Heart right ventricle (tissue), 16 donors: ENCODE measurements at regions of chr10 and their contacts with region 1.

Region 1: GRCh38 chr10:72223743-72224101 is 7.6 kb upstream of the ASCC1 start:
- DNase-seq: no peak
- ATAC-seq: peak in 3 of 8 donors; percentile 37 to 49 (median 48)
- H3K4me3 ChIP-seq: no peak overlapping the region
- H3K27ac ChIP-seq: peak overlapping the region in 9 of 10 donors; percentile 9 to 86 (median 59)
- H3K4me1 ChIP-seq: peaks cover 0 to 51% (median 34%) of the 10 kb centered on the region in 9 donors
- H3K27me3 ChIP-seq: no peaks in the 10 kb centered on the region
- CTCF ChIP-seq: no peak

Region 2: GRCh38 chr10:71957546-71958275 is 266.0 kb before region 1 on chr10:
- intact Hi-C with region 1: loop called in 5 of 10 experiments (anchors 5 to 10 kb)
- DNase-seq: no peak
- ATAC-seq: no peak
- H3K4me3 ChIP-seq: no peak overlapping the region
- H3K27ac ChIP-seq: no peak overlapping the region
- H3K4me1 ChIP-seq: peaks cover 2 to 12% (median 8%) of the 10 kb centered on the region in 9 donors
- H3K27me3 ChIP-seq: no peaks in the 10 kb centered on the region
- CTCF ChIP-seq: peak in 1 of 9 donors; percentile 8

Region 3: GRCh38 chr10:72048450-72049124 is 175.1 kb before region 1 on chr10:
- intact Hi-C with region 1: loop called in 6 of 10 experiments (anchors 5 to 10 kb)
- DNase-seq: peak; percentile 94
- ATAC-seq: peak; percentile 58 to 91 (median 84)
- H3K4me3 ChIP-seq: no peak overlapping the region
- H3K27ac ChIP-seq: no peak overlapping the region
- H3K4me1 ChIP-seq: peaks cover 0 to 25% (median 10%) of the 10 kb centered on the region in 9 donors
- H3K27me3 ChIP-seq: no peaks in the 10 kb centered on the region
- CTCF ChIP-seq: peak; percentile 99 to 100 (median 100)

Region 4: DNA sequence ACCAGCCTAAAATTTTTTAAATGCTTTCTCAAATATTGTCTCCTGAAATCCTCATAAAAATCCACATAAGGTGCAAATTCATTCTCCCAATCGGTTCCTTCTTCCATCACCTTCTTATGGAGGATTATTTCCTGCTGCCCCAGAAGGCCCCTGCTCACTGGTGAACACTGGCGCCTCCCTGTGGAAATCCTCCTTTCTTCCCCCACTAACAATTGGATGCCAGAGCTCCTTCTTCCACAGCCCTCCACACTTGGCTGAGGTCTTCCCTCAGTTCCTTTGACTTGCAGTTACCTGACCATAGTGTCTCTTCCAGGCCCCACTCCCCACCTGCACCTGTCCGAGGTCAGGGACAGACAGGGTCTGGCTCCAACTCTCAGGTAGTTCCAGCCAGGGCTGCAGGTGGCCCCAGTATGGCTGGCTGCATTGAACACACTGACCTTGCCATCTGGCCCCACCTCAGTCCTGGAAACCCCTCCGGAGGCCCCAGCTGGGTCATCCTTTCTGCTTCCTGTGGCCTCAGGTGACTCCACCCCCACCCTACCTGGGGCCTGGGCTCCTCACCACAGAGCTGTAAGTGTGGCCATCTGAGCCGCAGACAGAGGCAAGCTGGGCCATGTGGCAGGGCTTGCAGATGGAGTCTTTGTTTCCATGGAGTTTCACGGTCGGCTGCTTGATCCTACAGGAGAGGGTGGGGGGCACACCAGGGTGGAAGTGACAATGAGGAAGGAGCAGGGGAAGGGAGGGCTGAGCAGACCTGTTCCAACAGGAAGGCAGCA is 153.8 kb before region 1 on chr10:
- intact Hi-C with region 1: loop called in 2 of 10 experiments (anchors 10 kb)
- DNase-seq: no peak
- ATAC-seq: no peak
- H3K4me3 ChIP-seq: no peak overlapping the region
- H3K27ac ChIP-seq: no peak overlapping the region
- H3K4me1 ChIP-seq: peaks cover 0 to 53% (median 30%) of the 10 kb centered on the region in 9 donors
- H3K27me3 ChIP-seq: no peaks in the 10 kb centered on the region
- CTCF ChIP-seq: peak in 4 of 9 donors; percentile 11 to 24 (median 14)

Region 5: GRCh38 chr10:72126184-72126871 is 97.4 kb before region 1 on chr10:
- intact Hi-C with region 1: loop called in 8 of 10 experiments (anchors 5 to 10 kb)
- DNase-seq: no peak
- ATAC-seq: peak in 3 of 8 donors; percentile 22 to 41 (median 32)
- H3K4me3 ChIP-seq: no peak overlapping the region
- H3K27ac ChIP-seq: peak overlapping the region in 1 of 10 donors; percentile 1
- H3K4me1 ChIP-seq: peaks cover 0 to 25% (median 6%) of the 10 kb centered on the region in 9 donors
- H3K27me3 ChIP-seq: no peaks in the 10 kb centered on the region
- CTCF ChIP-seq: peak; percentile 7 to 57 (median 38)

Region 6: GRCh38 chr10:72319416-72320254 is 95.9 kb after region 1 on chr10:
- intact Hi-C with region 1: loop called in 1 of 10 experiments (anchors 10 kb)
- DNase-seq: peak; percentile 90 to 96
- ATAC-seq: peak; percentile 64 to 92 (median 80)
- H3K4me3 ChIP-seq: peak overlapping the region in 9 of 10 donors; percentile 25 to 57 (median 50)
- H3K27ac ChIP-seq: peak overlapping the region; percentile 72 to 99 (median 90)
- H3K4me1 ChIP-seq: peaks cover 42 to 98% (median 73%) of the 10 kb centered on the region in 9 donors
- H3K27me3 ChIP-seq: no peaks in the 10 kb centered on the region
- CTCF ChIP-seq: peak in 1 of 9 donors; percentile 9